Posterior vena cava (tissue), 2 donors: ENCODE measurements at regions of chr17 and their contacts with region 1.

Region 1: DNA sequence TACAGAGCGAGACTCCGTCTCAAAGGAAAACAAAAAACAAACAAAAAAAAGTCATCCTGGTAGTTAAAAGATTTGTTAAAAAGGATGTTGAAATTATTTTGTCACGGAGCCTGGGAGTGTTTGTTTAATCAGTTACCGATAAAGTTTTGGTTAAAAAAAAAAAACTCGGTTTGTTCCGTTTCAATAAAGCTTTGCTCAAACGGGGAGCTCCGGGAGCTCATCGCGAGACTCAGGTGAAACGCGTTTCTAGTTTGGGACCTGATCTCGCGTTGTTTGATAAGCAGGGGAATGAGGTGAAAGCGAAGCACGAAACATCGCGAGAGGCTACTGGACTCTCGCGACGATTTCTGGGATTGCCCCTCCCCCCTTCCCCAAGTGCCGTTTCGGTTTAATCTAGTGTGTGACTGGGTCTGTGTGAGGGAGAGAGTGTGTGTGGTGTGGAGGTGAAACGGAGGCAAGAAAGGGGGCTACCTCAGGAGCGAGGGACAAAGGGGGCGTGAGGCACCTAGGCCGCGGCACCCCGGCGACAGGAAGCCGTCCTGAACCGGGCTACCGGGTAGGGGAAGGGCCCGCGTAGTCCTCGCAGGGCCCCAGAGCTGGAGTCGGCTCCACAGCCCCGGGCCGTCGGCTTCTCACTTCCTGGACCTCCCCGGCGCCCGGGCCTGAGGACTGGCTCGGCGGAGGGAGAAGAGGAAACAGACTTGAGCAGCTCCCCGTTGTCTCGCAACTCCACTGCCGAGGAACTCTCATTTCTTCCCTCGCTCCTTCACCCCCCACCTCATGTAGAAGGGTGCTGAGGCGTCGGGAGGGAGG is at the start of gene CDK12:
- DNase-seq: peak; percentile 98
- total RNA-seq, gene CDK12: 37.6 to 40.8 TPM

Region 2: DNA sequence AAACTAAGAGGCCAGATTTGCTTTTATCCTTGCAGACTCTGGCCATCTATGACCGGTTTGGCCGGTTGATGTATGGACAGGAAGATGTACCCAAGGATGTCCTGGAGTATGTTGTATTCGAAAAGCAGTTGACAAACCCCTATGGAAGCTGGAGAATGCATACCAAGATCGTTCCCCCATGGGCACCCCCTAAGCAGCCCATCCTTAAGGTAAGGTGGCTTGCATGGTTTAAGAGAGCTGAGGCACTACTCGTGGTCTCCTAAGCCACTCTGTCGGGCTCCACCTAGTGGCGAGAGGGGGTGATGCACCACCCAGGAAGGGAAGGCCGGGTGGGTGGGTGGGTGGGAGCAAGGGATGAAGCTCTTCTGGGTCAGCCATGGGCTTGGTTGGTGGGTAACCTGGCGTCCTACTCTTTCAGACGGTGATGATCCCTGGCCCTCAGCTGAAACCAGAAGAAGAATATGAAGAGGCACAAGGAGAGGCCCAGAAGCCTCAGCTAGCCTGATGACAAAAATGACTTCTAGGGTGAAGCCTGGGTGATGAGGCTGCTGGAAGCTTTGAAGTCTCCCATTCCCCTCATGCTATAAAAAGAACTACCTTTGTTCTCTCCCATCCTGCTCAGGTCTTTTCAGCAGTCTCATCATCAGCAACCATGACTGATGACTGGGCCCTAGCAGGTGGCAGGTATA is 1139.1 kb before region 1 on chr17:
- intact Hi-C with region 1: no loop called
- DNase-seq: no peak

Region 3: DNA sequence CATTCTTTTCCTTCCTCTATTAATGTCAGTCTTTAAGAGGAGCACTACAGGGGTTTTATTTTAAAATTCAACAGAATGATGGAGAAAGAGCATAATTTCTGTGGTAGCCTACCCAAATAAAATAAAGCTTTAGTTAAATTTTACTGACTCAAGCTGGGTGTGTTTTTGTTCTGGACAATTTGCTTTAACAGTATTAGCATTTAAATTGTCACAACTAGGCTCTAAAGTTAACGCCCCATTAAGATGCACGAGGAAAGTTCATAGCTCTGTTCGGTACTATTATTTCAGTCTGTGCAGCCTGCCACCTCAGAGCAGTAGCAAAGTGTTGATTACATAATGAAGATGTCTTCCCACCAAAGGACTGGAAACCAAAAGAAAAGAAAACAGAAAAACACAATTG is 52.0 kb after region 1 on chr17:
- intact Hi-C with region 1: loop called in 1 of 2 experiments (anchors 2 kb)
- DNase-seq: no peak

Region 4: DNA sequence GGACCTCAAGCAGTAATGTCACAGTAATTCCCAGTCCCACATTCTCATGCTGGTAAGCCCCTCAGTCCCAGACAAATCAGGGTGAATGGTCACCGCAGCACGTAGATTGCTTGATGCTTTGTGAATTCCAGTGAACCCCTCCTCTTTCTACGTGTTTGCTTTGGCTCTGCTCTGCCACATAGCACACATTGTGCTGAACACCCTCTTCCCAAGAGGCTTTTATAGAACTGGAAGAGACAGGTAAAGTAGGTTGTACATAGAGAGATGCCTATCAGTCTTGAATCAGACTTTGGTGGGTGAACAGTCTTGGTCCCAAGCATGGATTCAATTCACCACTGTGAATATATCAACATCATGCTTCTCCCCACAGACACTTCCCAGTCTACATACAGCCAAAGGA is 1803.3 kb after region 1 on chr17:
- intact Hi-C with region 1: no loop called
- DNase-seq: no peak